Activated B cell treated with CpG ODN at 0.5 μM for 24 hours (primary cell): ENCODE measurements at regions of chr2 and their contacts with region 1.

Region 1: DNA sequence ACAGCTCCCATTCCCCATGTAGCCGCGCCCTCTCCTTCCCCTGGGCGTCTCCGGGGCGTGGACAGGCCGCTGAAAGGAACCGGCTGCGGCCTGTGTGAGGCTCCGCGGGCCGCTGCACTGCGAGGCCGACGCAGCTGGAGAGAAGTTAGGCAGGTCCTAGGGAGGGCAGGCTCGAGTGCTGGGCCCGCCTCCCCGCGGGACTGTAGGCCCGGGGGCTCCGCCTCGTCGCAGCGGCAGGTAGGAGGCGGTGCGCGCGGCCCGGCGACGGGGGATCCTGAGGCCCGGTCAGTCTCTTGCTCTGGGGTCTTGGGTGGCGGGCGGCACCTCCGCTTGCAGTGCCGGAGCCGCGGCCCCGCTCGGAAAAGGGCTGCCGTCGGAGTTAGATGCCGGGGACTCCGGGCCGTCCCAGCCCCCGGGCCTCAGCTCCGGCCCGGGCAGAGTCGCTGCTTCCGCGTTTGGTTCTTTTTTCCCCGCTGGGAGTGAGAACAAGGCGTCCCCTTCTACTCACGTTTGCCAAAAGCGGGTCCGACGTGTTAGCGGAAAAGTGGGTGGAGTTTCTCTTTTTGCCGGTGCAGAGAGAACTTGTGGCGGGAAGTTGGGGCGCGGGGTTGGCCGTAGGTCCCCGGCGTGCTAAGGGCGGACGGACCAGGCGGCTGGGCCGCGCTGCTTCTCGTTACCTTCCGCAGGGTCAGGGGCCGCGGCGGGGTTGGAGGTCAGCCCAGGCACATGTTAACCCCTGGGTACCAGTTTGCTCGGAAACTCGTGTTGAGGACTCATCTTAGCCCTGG is at the start of gene VRK2:
- DNase-seq: peak; percentile 87
- ATAC-seq: peak; percentile 91
- H3K4me3 Mint-ChIP-seq: peak within 1 kb of the TSS; percentile 91
- H3K27ac Mint-ChIP-seq: peak within 1 kb of the TSS; percentile 95
- H3K4me1 Mint-ChIP-seq: peaks cover 51% of the 10 kb centered on the region
- H3K27me3 Mint-ChIP-seq: no peaks in the 10 kb centered on the region
- CTCF ChIP-seq: no peak
- total RNA-seq, gene VRK2: 60.0 and 63.0 TPM in 2 replicates

Region 2: GRCh38 chr2:57973621-57974186 is 73.1 kb before region 1 on chr2:
- CTCF ChIA-PET with region 1: no interaction called
- POLR2A ChIA-PET with region 1: interaction called, 10 read pairs
- intact Hi-C with region 1: no loop called
- DNase-seq: no peak
- ATAC-seq: no peak
- H3K4me3 Mint-ChIP-seq: peak overlapping the region; percentile 21
- H3K27ac Mint-ChIP-seq: no peak overlapping the region
- H3K4me1 Mint-ChIP-seq: peaks cover 16% of the 10 kb centered on the region
- H3K27me3 Mint-ChIP-seq: no peaks in the 10 kb centered on the region
- CTCF ChIP-seq: no peak

Region 3: GRCh38 chr2:58019209-58019608 is 27.6 kb before region 1 on chr2:
- CTCF ChIA-PET with region 1: no interaction called
- POLR2A ChIA-PET with region 1: interaction called, 68 read pairs
- intact Hi-C with region 1: loop called (anchors 1 kb)
- DNase-seq: no peak
- ATAC-seq: no peak
- H3K4me3 Mint-ChIP-seq: no peak overlapping the region
- H3K27ac Mint-ChIP-seq: no peak overlapping the region
- H3K4me1 Mint-ChIP-seq: peaks cover 28% of the 10 kb centered on the region
- H3K27me3 Mint-ChIP-seq: no peaks in the 10 kb centered on the region
- CTCF ChIP-seq: no peak

Region 4: GRCh38 chr2:58063641-58064040 is 16.9 kb after region 1 on chr2:
- CTCF ChIA-PET with region 1: no interaction called
- POLR2A ChIA-PET with region 1: interaction called, 8 read pairs
- intact Hi-C with region 1: loop called (anchors 2 kb)
- DNase-seq: no peak
- ATAC-seq: no peak
- H3K4me3 Mint-ChIP-seq: no peak overlapping the region
- H3K27ac Mint-ChIP-seq: no peak overlapping the region
- H3K4me1 Mint-ChIP-seq: peaks cover 20% of the 10 kb centered on the region
- H3K27me3 Mint-ChIP-seq: no peaks in the 10 kb centered on the region
- CTCF ChIP-seq: no peak

Region 5: DNA sequence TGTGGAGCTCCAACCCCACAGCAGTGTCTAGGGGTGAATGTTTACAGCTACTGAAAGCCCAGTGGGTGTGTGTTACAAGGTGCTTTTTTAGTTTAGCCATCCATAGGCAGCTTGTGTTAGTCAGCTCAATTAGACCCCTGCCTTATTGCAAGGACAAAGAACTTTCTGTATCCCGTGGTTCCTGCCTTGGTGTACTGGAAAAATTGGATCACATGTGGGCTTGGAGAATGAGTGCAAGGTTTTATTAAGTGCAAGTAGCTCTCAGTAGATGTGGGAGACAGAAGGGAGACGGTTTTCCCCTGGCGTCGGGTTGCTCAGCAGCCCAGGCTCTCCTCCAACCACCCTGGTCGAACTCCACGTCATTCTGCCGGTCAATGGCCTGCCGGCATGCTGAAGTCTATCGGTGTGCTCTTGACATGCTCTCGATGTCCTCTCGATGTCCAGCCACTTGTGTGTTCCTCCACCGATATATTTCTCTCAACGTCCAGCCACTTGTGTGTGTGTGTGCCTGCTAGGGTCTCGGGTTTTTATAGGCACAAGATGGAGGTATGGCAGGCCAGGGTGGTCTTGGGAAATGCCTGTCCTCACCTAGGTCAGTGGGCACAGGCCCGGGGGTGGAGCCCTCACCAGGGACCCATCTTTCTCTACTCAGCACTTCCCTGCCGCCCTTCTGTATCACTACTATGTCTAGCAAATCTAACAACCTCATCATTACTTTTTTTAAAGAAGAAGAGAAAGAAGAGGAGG is 180.6 kb after region 1 on chr2:
- CTCF ChIA-PET with region 1: no interaction called
- POLR2A ChIA-PET with region 1: no interaction called
- intact Hi-C with region 1: no loop called
- DNase-seq: no peak
- ATAC-seq: no peak
- H3K4me3 Mint-ChIP-seq: no peak overlapping the region
- H3K27ac Mint-ChIP-seq: no peak overlapping the region
- H3K4me1 Mint-ChIP-seq: no peaks in the 10 kb centered on the region
- H3K27me3 Mint-ChIP-seq: no peaks in the 10 kb centered on the region
- CTCF ChIP-seq: no peak